ENCODE measurements at regions of chr2 and their contacts with region 1.

Region 1: DNA sequence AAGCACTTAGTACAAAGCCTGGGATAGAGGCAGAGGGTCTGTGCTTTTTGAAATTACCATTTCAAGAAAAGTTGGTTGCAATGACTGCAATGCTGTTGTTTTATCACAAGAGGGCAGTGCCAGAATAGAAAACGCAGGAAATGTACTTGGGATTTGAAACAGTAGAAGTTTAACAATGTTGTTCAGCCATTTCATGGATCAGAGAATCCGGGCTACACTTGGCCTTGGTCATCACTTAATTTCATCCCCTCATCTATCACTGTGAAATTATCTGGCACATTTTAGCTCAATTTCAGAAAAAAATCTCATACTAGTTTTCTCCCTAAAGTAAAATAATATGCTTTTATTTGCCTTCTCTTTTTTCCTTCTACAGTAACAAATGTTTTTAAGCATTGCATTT is 70.8 kb downstream of the RAPGEF4 start:
- DNase-seq: peak; percentile 29
- H3K4me3 ChIP-seq: no peak overlapping the region
- H3K27ac ChIP-seq: no peak overlapping the region
- H3K27me3 ChIP-seq: no peaks in the 10 kb centered on the region
- CTCF ChIP-seq: peak; percentile 96

Region 2: DNA sequence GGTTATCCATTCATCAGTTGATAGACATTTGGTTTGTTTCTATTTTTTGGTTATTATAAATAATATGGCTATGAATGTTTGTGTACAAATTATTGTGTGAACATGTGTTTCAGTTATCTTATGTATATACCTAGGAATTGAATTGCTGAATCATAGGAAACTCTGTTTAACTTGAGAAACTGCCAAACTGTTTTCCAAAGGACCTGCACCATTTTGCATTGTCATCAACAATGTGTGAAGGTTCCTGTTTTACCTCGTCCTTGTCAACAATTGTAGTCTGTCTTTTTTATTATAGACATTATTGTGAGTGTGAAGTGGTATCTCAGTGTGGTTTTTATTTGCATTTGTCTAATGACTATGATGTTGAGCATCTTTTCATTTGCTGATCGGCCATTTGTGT is 233.5 kb before region 1 on chr2:
- CTCF ChIA-PET with region 1: no interaction called
- POLR2A ChIA-PET with region 1: no interaction called
- DNase-seq: no peak
- H3K4me3 ChIP-seq: no peak overlapping the region
- H3K27ac ChIP-seq: no peak overlapping the region
- H3K27me3 ChIP-seq: no peaks in the 10 kb centered on the region
- CTCF ChIP-seq: no peak

Region 3: GRCh38 chr2:172821370-172822347 is 15.2 kb after region 1 on chr2:
- CTCF ChIA-PET with region 1: interaction called, 21 read pairs
- POLR2A ChIA-PET with region 1: no interaction called
- DNase-seq: no peak
- H3K4me3 ChIP-seq: no peak overlapping the region
- H3K27ac ChIP-seq: no peak overlapping the region
- H3K27me3 ChIP-seq: no peaks in the 10 kb centered on the region
- CTCF ChIP-seq: no peak

Region 4: GRCh38 chr2:172864182-172864581 is 57.7 kb after region 1 on chr2:
- CTCF ChIA-PET with region 1: interaction called, 13 read pairs
- POLR2A ChIA-PET with region 1: no interaction called
- DNase-seq: no peak
- H3K4me3 ChIP-seq: no peak overlapping the region
- H3K27ac ChIP-seq: no peak overlapping the region
- H3K27me3 ChIP-seq: no peaks in the 10 kb centered on the region
- CTCF ChIP-seq: peak; percentile 73

Region 5: GRCh38 chr2:173218326-173219056 is 412.0 kb after region 1 on chr2:
- CTCF ChIA-PET with region 1: interaction called, 10 read pairs
- POLR2A ChIA-PET with region 1: no interaction called
- DNase-seq: no peak
- H3K4me3 ChIP-seq: no peak overlapping the region
- H3K27ac ChIP-seq: no peak overlapping the region
- H3K27me3 ChIP-seq: no peaks in the 10 kb centered on the region
- CTCF ChIP-seq: no peak

Measured in AG04450 (cell line).